ENCODE measurements at regions of chr11 and their contacts with region 1.

Region 1: DNA sequence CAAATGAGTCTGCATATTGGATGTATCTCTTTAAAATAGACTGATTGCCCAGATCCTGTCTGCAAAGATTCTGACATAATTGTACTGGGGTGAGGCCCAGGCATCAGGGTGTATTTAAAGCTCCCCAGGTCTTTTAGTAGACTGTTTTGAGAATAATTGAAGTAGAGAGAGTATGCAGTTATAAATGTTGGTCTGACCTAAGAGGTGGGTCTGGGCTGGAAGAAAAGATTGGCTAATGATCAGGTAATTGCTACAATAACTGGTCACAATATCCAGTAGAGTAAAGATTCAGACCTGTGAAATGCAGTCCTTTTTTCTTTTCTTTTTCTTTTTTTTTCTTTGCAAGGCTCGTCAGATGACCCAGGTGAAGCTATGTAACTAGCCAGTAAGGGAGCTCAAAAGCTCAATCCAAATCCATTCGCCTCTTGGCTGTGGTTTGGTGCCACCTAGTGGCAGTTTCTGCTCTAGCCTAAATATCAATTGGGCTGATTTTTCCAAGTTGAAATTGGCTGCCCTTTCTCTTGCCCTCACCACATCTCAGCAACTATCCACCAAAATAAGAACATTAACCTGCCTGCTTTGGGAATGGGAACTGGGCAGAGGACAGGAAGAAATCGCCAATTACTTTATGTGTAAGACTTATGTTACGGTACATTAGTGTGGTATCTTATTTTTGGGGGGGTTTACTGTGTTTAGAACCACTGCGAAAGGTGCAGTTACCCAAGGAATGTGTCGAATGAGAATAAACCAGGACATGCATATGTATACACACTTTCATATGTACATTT is 45.9 kb downstream of the ZNF143 start:
- DNase-seq: peak; percentile 85
- H3K4me3 ChIP-seq: no peak overlapping the region
- H3K27ac ChIP-seq: no peak overlapping the region
- H3K4me1 ChIP-seq: peaks cover 4% of the 10 kb centered on the region
- CTCF ChIP-seq: peak; percentile 99

Region 2: DNA sequence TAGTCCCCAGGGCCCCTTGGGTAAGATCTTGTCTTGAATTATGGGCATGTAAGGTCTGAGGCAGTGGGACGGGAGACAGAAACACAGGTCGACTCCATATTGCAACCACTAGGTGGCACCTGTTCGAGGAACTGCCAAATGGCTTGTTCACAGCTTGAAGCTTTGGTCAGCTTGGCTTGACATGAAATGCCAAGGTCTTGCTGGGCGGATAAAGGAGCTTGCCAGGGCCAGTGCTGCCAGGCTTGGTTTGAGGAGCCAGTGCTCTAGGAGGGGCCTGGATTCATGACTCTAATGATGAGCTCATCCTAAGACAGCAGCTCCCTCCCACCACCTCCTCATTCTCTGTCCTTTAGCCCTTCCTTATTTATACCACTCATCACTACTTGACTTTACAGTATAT is 491.0 kb before region 1 on chr11:
- CTCF ChIA-PET with region 1: no interaction called
- POLR2A ChIA-PET with region 1: no interaction called
- intact Hi-C with region 1: loop called (anchors 2 kb)
- DNase-seq: peak; percentile 75
- H3K4me3 ChIP-seq: no peak overlapping the region
- H3K27ac ChIP-seq: no peak overlapping the region
- H3K4me1 ChIP-seq: no peaks in the 10 kb centered on the region
- CTCF ChIP-seq: peak; percentile 87

Region 3: DNA sequence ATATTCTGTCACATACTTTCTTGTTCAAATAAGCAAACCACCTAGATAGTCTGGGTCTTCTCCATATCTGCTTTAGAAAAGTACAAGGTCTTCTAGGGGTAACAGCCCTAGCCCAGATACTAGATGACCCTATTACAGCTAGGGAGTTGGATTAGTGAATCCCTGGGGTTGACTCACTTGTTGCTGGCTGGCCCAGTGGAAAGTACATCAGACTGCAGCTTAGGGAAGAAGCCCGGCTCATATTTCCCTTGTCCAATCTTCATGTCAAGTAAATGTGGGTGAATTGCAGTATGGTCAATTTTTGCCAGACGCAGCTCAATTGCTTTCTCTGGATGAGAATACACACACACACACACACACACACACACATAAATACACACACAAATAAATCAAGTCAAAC is 336.2 kb before region 1 on chr11:
- CTCF ChIA-PET with region 1: no interaction called
- POLR2A ChIA-PET with region 1: interaction called, 5 read pairs
- intact Hi-C with region 1: loop called (anchors 2 kb)
- DNase-seq: no peak
- H3K4me3 ChIP-seq: no peak overlapping the region
- H3K27ac ChIP-seq: no peak overlapping the region
- H3K4me1 ChIP-seq: no peaks in the 10 kb centered on the region
- CTCF ChIP-seq: no peak

Region 4: DNA sequence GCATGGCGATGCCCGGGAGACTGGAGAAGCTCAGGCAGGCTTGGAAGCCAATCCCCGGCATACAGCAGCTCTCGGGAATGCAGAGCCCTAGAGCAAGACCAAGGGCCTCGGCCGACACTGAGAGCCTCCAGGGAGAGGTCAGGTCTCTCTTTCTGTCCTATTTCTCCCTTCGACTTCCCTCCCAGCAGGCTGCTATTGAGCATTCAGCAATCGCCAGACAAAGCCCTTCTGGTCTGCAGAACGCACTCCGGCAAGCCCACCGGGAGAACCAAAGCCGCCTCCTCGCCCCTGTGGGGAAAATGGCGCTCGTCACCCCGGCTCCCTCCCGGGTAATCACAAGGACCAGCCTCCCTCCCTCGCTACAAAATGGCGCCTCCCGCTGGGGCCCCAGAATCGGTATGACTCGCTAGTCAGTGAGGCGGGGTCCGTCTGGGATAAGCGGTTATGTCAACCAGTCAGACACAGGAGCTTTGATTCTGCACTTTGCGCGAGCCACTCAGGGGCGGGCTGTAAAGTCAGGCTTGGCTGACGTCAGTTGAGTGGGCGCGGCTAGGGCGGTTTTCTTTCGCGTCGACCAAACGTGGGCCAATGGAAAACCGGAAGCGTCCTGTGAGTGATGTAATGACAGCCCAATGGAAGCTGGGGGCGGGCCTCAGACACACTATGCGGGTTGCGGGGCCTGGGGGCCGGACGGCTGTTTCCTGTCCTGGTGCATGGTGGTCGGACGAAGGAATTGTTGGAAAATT is 46.2 kb before region 1 on chr11 and contains the start of gene ZNF143:
- CTCF ChIA-PET with region 1: no interaction called
- POLR2A ChIA-PET with region 1: interaction called, 11 read pairs
- intact Hi-C with region 1: no loop called
- DNase-seq: peak; percentile 100
- H3K4me3 ChIP-seq: peak within 1 kb of the TSS; percentile 97
- H3K27ac ChIP-seq: peak within 1 kb of the TSS; percentile 97
- H3K4me1 ChIP-seq: peaks cover 28% of the 10 kb centered on the region
- CTCF ChIP-seq: no peak
- total RNA-seq, gene ZNF143: 25.0 and 36.2 TPM in 2 replicates